ENCODE measurements at regions of chr6 and their contacts with region 1.

Region 1: GRCh38 chr6:105900125-105900937 is 185.8 kb upstream of the PRDM1 start:
- DNase-seq: peak; percentile 52
- H3K4me3 Mint-ChIP-seq: peak overlapping the region; percentile 45
- H3K27ac Mint-ChIP-seq: peak overlapping the region; percentile 73
- H3K4me1 Mint-ChIP-seq: peaks cover 16% of the 10 kb centered on the region
- H3K27me3 Mint-ChIP-seq: peaks cover 4% of the 10 kb centered on the region

Region 2: GRCh38 chr6:105781248-105781647 is 119.1 kb before region 1 on chr6:
- CTCF ChIA-PET with region 1: interaction called, 3 read pairs
- intact Hi-C with region 1: loop called (anchors 1 kb)
- DNase-seq: peak; percentile 77
- H3K4me3 Mint-ChIP-seq: no peak overlapping the region
- H3K27ac Mint-ChIP-seq: no peak overlapping the region
- H3K4me1 Mint-ChIP-seq: peaks cover 34% of the 10 kb centered on the region
- H3K27me3 Mint-ChIP-seq: no peaks in the 10 kb centered on the region

Region 3: GRCh38 chr6:105872246-105872645 is 28.1 kb before region 1 on chr6:
- CTCF ChIA-PET with region 1: interaction called, 3 read pairs
- intact Hi-C with region 1: loop called (anchors 1 kb)
- DNase-seq: no peak
- H3K4me3 Mint-ChIP-seq: no peak overlapping the region
- H3K27ac Mint-ChIP-seq: no peak overlapping the region
- H3K4me1 Mint-ChIP-seq: peaks cover 16% of the 10 kb centered on the region
- H3K27me3 Mint-ChIP-seq: peaks cover 21% of the 10 kb centered on the region

Region 4: GRCh38 chr6:105920071-105920470 is 19.7 kb after region 1 on chr6:
- CTCF ChIA-PET with region 1: no interaction called
- intact Hi-C with region 1: loop called (anchors 1 kb)
- DNase-seq: no peak
- H3K4me3 Mint-ChIP-seq: no peak overlapping the region
- H3K27ac Mint-ChIP-seq: no peak overlapping the region
- H3K4me1 Mint-ChIP-seq: no peaks in the 10 kb centered on the region
- H3K27me3 Mint-ChIP-seq: no peaks in the 10 kb centered on the region

Region 5: DNA sequence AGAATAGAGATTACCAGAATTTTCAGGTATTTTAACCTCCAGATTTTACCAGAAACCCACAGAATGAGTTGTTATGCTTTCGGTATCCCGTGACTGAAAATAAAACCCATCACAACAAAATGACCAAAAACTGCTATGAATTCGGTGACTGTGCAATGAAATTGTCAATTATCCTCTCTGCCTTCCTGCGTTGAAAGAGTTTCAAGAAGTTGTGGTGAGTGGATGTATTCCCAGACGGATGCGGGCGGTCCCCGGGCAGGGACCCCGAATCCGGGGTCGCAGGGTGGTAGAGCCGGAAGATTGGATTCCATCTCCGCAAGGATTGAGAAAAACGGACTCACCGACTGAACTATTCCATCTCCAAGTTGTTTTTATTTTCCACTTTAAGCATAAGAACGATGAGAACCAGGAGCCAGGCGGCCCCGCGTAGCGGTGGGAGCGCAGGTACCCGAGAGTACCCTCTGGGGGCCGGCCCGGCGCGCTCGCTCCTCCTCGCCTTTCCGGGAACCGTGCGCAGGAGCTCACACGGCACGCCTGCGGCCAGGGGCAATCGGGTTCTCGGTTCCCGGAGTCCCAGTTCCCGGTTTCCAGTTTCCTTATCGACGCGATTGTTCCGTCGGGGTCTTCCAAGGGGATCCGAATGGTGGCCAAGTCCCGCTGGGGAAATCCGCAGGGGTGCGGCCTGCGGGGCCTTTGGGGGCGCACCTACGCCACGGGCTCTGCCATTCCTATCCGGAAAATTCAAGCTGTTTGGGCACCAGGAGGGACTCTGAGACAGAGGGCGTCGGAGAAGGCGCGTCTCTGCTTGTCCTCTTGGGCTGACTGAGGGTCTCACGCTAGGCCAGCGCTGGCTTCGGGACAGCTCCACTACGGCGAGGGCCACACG is 80.9 kb after region 1 on chr6:
- CTCF ChIA-PET with region 1: no interaction called
- intact Hi-C with region 1: loop called (anchors 1 kb)
- DNase-seq: peak; percentile 58
- H3K4me3 Mint-ChIP-seq: peak overlapping the region; percentile 62
- H3K27ac Mint-ChIP-seq: peak overlapping the region; percentile 79
- H3K4me1 Mint-ChIP-seq: peaks cover 26% of the 10 kb centered on the region
- H3K27me3 Mint-ChIP-seq: peaks cover 52% of the 10 kb centered on the region

Region 6: GRCh38 chr6:106085984-106086813 is 185.9 kb after region 1 on chr6 and contains the start of gene PRDM1:
- CTCF ChIA-PET with region 1: interaction called, 4 read pairs
- intact Hi-C with region 1: loop called (anchors 1 kb)
- DNase-seq: peak; percentile 87
- H3K4me3 Mint-ChIP-seq: peak within 1 kb of the TSS; percentile 75
- H3K27ac Mint-ChIP-seq: peak within 1 kb of the TSS; percentile 6
- H3K4me1 Mint-ChIP-seq: peaks cover 51% of the 10 kb centered on the region
- H3K27me3 Mint-ChIP-seq: peaks cover 46% of the 10 kb centered on the region
- total RNA-seq, gene PRDM1: 3.4 to 4.0 TPM

Region 7: DNA sequence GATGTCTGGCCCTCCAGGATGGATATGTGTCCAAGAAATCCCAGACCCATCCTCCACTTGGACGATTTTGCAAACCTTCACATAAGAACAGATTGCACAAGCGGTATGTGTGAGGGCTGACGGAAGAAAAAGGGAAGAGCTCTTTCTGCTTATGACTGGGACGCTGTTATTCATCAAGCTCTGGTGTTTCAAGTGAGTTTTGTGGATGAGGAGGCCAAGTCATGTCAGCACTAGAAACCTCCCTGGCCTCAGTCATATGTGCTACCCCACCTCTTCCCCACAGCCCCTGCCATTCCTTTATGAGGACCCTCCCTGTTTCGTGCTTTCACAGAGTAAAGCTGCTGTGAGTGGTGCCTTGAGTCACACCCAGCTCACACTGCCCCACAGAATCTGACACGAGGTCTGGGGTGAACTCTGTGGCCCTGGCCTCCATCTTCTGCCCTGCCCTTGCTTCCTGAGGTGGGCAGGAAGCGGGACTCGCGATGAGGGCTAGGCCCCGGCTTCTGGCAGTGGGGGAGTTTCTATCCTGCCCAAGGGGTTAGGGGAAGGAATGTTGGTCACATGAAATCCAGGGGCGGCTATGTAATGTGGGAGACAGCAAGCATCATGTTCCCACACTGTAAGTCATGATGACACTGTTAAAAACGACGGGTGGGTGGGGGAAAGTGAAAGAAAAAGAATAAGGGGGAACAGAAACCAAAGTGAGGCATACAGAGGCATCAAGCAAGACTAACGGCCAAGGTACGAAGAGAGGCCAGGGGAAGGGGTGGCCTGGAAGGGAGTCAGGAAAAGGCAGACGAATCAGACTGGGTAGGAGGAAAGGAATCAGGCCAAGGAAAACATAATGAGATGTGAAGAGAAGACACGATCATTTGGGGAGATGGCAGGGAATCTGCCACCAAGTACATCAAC is 263.9 kb after region 1 on chr6:
- CTCF ChIA-PET with region 1: no interaction called
- intact Hi-C with region 1: loop called (anchors 1 kb)
- DNase-seq: peak; percentile 80
- H3K4me3 Mint-ChIP-seq: peak overlapping the region; percentile 36
- H3K27ac Mint-ChIP-seq: peak overlapping the region; percentile 78
- H3K4me1 Mint-ChIP-seq: peaks cover 35% of the 10 kb centered on the region
- H3K27me3 Mint-ChIP-seq: peaks cover 2% of the 10 kb centered on the region

Measured in activated naive CD4-positive, alpha-beta T cell treated with anti-CD3 and anti-CD28 coated beads for 36 hours (primary cell).